Left colon (tissue), 2 donors: ENCODE measurements at regions of chr4 and their contacts with region 1.

Region 1: GRCh38 chr4:111641955-111642579 is 503.2 kb upstream of the FAM241A start:
- DNase-seq: peak; percentile 41 to 53
- ATAC-seq: peak; percentile 85

Region 2: DNA sequence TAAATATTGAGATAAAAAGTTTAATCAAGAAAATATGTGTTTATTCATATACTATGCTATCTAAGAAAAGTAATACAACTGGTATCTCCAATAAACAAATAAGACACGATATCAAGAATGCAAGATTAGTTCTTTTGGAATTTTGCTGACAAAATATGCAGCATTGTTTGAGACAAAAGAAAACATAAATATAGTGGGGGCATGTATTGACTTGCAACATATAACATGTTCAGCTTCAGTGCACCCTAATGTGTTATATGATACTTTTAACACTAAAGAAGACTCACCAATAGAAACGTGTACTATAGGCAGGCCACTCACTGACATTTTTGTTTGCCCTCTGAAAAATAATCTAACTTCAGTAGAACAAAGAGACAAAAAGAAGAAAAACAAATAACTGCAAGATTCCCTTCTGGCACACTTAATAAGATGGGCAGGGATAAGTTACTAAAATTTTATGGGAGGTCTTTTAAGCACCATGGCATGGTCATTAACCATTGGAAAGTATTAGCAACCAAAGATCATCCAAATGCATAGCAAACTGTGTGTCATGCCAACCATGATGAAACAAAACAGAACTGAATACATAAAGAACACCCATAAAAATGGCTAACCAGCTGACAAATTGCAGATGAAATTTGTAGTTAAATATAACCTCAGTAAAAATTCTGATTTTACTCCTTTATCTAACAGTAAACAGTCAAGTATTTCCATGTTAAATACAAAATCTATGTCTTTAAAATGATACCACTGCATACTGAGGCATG is 55.3 kb after region 1 on chr4:
- intact Hi-C with region 1: no loop called
- DNase-seq: no peak
- ATAC-seq: no peak

Region 3: GRCh38 chr4:111854494-111855087 is 212.5 kb after region 1 on chr4:
- intact Hi-C with region 1: loop called in 1 of 2 experiments (anchors 5 kb)
- DNase-seq: peak in 1 of 2 donors; percentile 11
- ATAC-seq: peak; percentile 66